ENCODE measurements at regions of chr14 and their contacts with region 1.

Region 1: GRCh38 chr14:37230551-37231194 is 32.9 kb downstream of the MIPOL1 start:
- DNase-seq: no peak
- ATAC-seq: peak; percentile 71
- H3K4me3 ChIP-seq: no peak overlapping the region
- H3K27ac ChIP-seq: no peak overlapping the region
- H3K4me1 ChIP-seq: no peaks in the 10 kb centered on the region
- H3K27me3 ChIP-seq: no peaks in the 10 kb centered on the region
- CTCF ChIP-seq: peak; percentile 53 to 59 (median 56)
- EP300 ChIP-seq: no peak
- POLR2A ChIP-seq: no peak
- RAD21 ChIP-seq: peak; percentile 37; the same call in 1 of the 2 replicates

Region 2: GRCh38 chr14:37195327-37195726 is 35.3 kb before region 1 on chr14:
- CTCF ChIA-PET with region 1: no interaction called
- POLR2A ChIA-PET with region 1: no interaction called
- RAD21 ChIA-PET with region 1: no interaction called
- SMC1A ChIA-PET with region 1: no interaction called
- in situ Hi-C with region 1: no loop called
- intact Hi-C with region 1: no loop called
- DNase-seq: no peak
- ATAC-seq: no peak
- H3K4me3 ChIP-seq: no peak overlapping the region
- H3K27ac ChIP-seq: no peak overlapping the region
- H3K4me1 ChIP-seq: no peaks in the 10 kb centered on the region
- H3K27me3 ChIP-seq: no peaks in the 10 kb centered on the region
- CTCF ChIP-seq: no peak
- EP300 ChIP-seq: no peak
- POLR2A ChIP-seq: no peak
- RAD21 ChIP-seq: no peak

Region 3: GRCh38 chr14:37241198-37241597 is 10.5 kb after region 1 on chr14:
- CTCF ChIA-PET with region 1: interaction called, 18 read pairs
- POLR2A ChIA-PET with region 1: no interaction called
- RAD21 ChIA-PET with region 1: no interaction called
- SMC1A ChIA-PET with region 1: interaction called, 5 read pairs
- in situ Hi-C with region 1: no loop called
- intact Hi-C with region 1: no loop called
- DNase-seq: no peak
- ATAC-seq: no peak
- H3K4me3 ChIP-seq: no peak overlapping the region
- H3K27ac ChIP-seq: no peak overlapping the region
- H3K4me1 ChIP-seq: no peaks in the 10 kb centered on the region
- H3K27me3 ChIP-seq: no peaks in the 10 kb centered on the region; a peak in 1 of 4 replicates
- CTCF ChIP-seq: no peak
- EP300 ChIP-seq: no peak
- POLR2A ChIP-seq: no peak
- RAD21 ChIP-seq: no peak

Region 4: GRCh38 chr14:37246427-37246914 is 15.8 kb after region 1 on chr14:
- CTCF ChIA-PET with region 1: interaction called, 11 read pairs
- POLR2A ChIA-PET with region 1: no interaction called
- RAD21 ChIA-PET with region 1: no interaction called
- SMC1A ChIA-PET with region 1: interaction called, 5 read pairs
- in situ Hi-C with region 1: no loop called
- intact Hi-C with region 1: no loop called
- DNase-seq: no peak
- ATAC-seq: no peak
- H3K4me3 ChIP-seq: no peak overlapping the region
- H3K27ac ChIP-seq: no peak overlapping the region
- H3K4me1 ChIP-seq: no peaks in the 10 kb centered on the region
- H3K27me3 ChIP-seq: no peaks in the 10 kb centered on the region
- CTCF ChIP-seq: peak; percentile 52 to 57 (median 54); a peak in 5 of 6 replicates
- EP300 ChIP-seq: no peak
- POLR2A ChIP-seq: no peak
- RAD21 ChIP-seq: peak; percentile 67

Region 5: DNA sequence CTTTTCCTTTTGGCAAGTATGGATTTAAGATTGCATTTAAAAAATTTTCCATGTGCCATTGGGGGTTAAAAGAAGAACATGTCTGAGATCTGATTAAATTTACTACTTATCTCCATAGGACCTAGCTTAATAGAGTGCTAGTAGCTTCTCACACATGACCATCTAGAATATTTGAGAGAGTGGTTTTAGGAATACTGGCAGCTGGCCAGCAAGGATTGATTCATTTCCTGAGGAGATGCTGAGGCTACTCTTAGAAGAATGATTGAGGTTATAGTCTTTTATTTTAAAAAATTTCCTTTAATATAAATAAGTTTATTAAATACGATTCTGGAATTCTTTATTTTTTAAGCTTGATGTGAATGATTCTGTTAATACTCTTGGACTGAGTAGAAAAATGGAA is 23.2 kb after region 1 on chr14:
- CTCF ChIA-PET with region 1: interaction called, 10 read pairs
- POLR2A ChIA-PET with region 1: no interaction called
- RAD21 ChIA-PET with region 1: no interaction called
- SMC1A ChIA-PET with region 1: no interaction called
- in situ Hi-C with region 1: no loop called
- intact Hi-C with region 1: no loop called
- DNase-seq: no peak
- ATAC-seq: no peak
- H3K4me3 ChIP-seq: no peak overlapping the region
- H3K27ac ChIP-seq: no peak overlapping the region
- H3K4me1 ChIP-seq: no peaks in the 10 kb centered on the region
- H3K27me3 ChIP-seq: no peaks in the 10 kb centered on the region
- CTCF ChIP-seq: no peak
- EP300 ChIP-seq: no peak
- POLR2A ChIP-seq: no peak
- RAD21 ChIP-seq: no peak